GM10248 (cell line): ENCODE measurements at regions of chr1 and their contacts with region 1.

Region 1: GRCh38 chr1:167803358-167804207 is 81.8 kb downstream of the MPZL1 start:
- DNase-seq: peak; percentile 90
- CTCF ChIP-seq: peak; percentile 96

Region 2: DNA sequence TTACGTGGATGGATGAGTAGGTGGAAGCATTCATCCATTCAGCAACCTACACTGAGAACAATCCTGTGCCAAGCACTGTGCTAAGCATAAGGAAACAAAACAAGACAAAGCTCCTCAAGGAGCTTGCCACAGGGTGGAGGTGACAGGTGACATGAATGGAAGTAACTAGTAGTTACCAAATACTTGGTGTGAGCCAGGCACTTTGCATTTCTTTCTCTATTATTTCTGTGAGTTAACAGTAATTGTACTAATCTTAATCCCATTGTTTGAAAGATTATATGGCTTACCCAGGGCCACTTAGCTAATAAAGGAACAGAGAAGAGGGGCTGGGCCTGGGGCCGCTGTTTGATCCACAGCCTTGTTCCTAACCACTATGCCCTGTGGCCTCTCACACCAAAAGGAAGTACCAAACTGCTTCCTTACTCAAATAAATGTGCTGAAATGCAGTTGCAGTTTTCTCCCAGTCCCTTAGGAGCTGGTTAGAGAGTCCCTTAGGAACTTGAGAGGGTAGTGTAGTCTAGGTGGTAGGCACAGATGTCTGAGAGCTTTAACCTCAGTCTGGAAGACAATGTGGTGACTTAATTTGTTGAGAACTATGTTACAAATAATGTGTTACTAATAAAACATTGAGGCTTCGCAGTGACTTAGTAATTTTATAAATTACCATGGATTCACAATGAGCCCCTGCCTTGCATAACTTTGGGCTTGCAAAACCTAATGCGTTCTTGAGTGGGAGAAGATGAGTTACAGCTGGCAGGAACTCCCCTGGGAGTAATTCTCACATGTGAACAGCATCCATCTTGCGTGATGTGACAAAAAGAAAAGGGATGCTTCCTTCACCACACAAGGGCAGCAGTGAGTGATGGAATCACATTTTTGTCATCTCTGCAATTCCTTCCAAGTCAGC is 12.0 kb before region 1 on chr1:
- CTCF ChIA-PET with region 1: interaction called, 28 read pairs
- POLR2A ChIA-PET with region 1: no interaction called
- DNase-seq: no peak
- CTCF ChIP-seq: no peak